ENCODE measurements at regions of chr5 and their contacts with region 1.

Region 1: DNA sequence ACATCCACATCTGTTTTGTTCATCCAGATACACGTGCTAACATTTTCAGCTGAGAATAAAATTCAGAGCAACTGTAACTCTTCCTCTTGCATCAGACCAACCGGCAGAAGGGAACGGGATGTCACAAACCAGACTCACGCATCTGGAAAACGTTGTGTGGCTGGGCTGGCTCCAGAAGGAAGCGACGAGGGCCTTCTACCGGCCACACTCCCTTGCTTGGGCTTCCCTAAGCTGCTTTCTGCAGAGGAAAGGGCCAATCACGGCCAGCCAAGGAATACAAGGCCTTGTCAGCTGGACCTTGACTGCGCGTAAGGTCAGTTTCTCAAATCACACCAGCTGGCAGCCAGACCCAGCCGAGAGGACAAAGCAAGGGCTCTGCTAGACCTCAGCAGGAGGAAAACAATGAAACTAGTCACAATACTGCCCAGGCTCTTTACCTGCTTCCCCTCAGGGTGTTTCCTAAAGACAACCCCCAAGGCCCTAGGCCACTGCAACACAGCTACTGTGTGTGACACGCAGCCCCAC is 106.1 kb downstream of the THBS4 start:
- DNase-seq: peak in 2 of 14 experiments; percentile 40 to 42
- ATAC-seq: no peak
- H3K4me3 ChIP-seq: no peak overlapping the region
- H3K4me3 Mint-ChIP-seq: peak overlapping the region; percentile 84
- H3K27ac ChIP-seq: peak overlapping the region; percentile 42 to 51
- H3K27ac Mint-ChIP-seq: peak overlapping the region; percentile 95
- H3K4me1 ChIP-seq: peaks cover 60% of the 10 kb centered on the region
- H3K4me1 Mint-ChIP-seq: peaks cover 84% of the 10 kb centered on the region
- H3K27me3 ChIP-seq: no peaks in the 10 kb centered on the region
- H3K27me3 Mint-ChIP-seq: no peaks in the 10 kb centered on the region
- CTCF ChIP-seq: no peak

Region 2: GRCh38 chr5:80103371-80103770 is 37.8 kb before region 1 on chr5:
- CTCF ChIA-PET with region 1: no interaction called
- POLR2A ChIA-PET with region 1: interaction called, 13 read pairs
- intact Hi-C with region 1: no loop called
- DNase-seq: no peak
- ATAC-seq: no peak
- H3K4me3 ChIP-seq: no peak overlapping the region
- H3K4me3 Mint-ChIP-seq: no peak overlapping the region
- H3K27ac ChIP-seq: no peak overlapping the region
- H3K27ac Mint-ChIP-seq: peak overlapping the region; percentile 41
- H3K4me1 ChIP-seq: peaks cover 3% of the 10 kb centered on the region
- H3K4me1 Mint-ChIP-seq: peaks cover 54% of the 10 kb centered on the region
- H3K27me3 ChIP-seq: no peaks in the 10 kb centered on the region
- H3K27me3 Mint-ChIP-seq: no peaks in the 10 kb centered on the region
- CTCF ChIP-seq: no peak

Region 3: DNA sequence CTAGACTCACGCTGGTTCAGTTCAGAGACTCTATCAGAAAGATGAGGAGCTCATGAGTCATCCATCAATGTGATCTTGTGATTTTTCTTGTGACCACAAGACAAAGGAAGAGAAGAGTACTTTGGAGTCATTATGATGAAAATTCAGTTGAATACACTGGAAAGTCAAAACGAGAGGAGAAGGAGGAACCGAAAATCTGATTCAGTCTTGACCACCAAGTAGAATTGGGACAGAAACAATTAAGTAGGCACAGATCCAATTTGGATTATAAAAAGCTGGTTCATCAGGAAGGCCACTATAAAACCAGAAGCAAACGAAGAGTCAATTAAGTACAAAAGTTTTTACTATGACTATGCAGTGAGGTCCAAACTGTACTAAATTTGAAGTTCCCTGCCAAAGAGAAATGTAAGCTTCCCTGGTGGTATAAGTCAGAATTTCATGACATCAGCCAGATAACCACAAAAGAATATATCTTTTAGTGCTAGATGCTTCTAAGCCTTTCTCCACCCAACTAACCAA is 15.2 kb before region 1 on chr5:
- CTCF ChIA-PET with region 1: interaction called, 8 read pairs
- POLR2A ChIA-PET with region 1: interaction called, 19 read pairs
- intact Hi-C with region 1: loop called in 1 of 2 experiments (anchors 1 kb)
- DNase-seq: peak in 4 of 14 experiments; percentile 50 to 75 (median 62)
- ATAC-seq: peak; percentile 83
- H3K4me3 ChIP-seq: no peak overlapping the region
- H3K4me3 Mint-ChIP-seq: peak overlapping the region; percentile 1
- H3K27ac ChIP-seq: peak overlapping the region in 1 of 2 donors; percentile 35
- H3K27ac Mint-ChIP-seq: peak overlapping the region; percentile 60
- H3K4me1 ChIP-seq: peaks cover 38% of the 10 kb centered on the region
- H3K4me1 Mint-ChIP-seq: peaks cover 57% of the 10 kb centered on the region
- H3K27me3 ChIP-seq: no peaks in the 10 kb centered on the region
- H3K27me3 Mint-ChIP-seq: no peaks in the 10 kb centered on the region
- CTCF ChIP-seq: no peak

Region 4: DNA sequence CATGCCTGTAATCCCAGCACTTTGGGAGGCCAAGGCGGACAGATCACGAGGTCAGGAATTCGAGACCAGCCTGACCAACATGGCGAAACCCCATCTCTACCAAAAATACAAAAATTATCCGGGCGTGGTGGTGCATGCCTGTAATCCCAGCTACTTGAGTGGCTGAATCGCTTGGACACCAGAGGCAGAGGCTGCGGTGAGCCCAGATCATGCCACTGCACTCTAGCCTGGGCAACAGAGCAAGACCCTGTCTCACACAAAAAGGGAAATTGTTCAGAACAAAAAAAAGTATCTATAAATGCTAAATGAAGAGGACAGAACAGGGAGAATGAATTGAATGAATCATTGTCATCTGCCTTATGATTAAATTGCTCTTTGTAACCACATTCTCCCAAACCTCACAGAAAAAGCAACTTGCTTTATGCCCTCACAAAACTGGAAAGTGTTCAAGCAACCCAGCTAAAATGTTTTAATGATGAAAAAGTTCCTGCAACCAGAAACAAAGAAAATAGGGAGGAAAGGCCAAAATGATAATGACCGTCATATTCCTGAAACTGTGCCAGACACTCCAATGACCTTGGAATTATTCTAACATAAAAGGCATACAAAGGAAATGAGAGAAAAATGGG is 31.0 kb after region 1 on chr5:
- CTCF ChIA-PET with region 1: no interaction called
- POLR2A ChIA-PET with region 1: interaction called, 4 read pairs
- intact Hi-C with region 1: loop called in 1 of 2 experiments (anchors 5 kb)
- DNase-seq: no peak
- ATAC-seq: no peak
- H3K4me3 ChIP-seq: no peak overlapping the region
- H3K4me3 Mint-ChIP-seq: no peak overlapping the region
- H3K27ac ChIP-seq: no peak overlapping the region
- H3K27ac Mint-ChIP-seq: peak overlapping the region; percentile 78
- H3K4me1 ChIP-seq: peaks cover 14% of the 10 kb centered on the region
- H3K4me1 Mint-ChIP-seq: peaks cover 48% of the 10 kb centered on the region
- H3K27me3 ChIP-seq: no peaks in the 10 kb centered on the region
- H3K27me3 Mint-ChIP-seq: no peaks in the 10 kb centered on the region
- CTCF ChIP-seq: no peak

Region 5: DNA sequence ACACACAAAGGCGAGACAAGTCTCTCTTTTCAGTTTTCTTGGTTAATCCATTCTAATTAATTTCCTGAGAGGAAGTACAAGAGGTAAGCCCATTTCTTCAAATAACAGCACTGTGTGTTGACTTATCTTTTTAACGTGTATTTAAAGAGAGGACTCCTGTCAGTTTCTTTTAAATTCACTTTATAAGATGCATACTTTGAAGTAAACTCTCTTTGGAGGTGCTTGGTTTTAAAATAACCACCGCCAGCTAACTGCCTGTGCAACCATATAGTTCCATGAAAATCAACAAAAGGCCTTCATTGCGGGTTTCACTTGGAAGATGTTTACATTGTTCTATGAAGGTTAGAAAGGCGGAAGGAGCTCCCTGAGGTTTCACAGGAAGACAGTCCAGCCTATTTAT is 127.7 kb after region 1 on chr5:
- CTCF ChIA-PET with region 1: no interaction called
- POLR2A ChIA-PET with region 1: interaction called, 14 read pairs
- intact Hi-C with region 1: loop called in 1 of 2 experiments (anchors 5 kb)
- DNase-seq: no peak
- ATAC-seq: peak; percentile 35
- H3K4me3 ChIP-seq: no peak overlapping the region
- H3K4me3 Mint-ChIP-seq: peak overlapping the region; percentile 81
- H3K27ac ChIP-seq: peak overlapping the region in 1 of 2 donors; percentile 5
- H3K27ac Mint-ChIP-seq: peak overlapping the region; percentile 99
- H3K4me1 ChIP-seq: peaks cover 40% of the 10 kb centered on the region
- H3K4me1 Mint-ChIP-seq: peaks cover 56% of the 10 kb centered on the region
- H3K27me3 ChIP-seq: no peaks in the 10 kb centered on the region
- H3K27me3 Mint-ChIP-seq: no peaks in the 10 kb centered on the region
- CTCF ChIP-seq: no peak

Region 6: GRCh38 chr5:80414113-80414512 is 272.9 kb after region 1 on chr5:
- CTCF ChIA-PET with region 1: no interaction called
- POLR2A ChIA-PET with region 1: no interaction called
- intact Hi-C with region 1: no loop called
- DNase-seq: peak in 1 of 14 experiments; percentile 15
- ATAC-seq: no peak
- H3K4me3 ChIP-seq: no peak overlapping the region
- H3K4me3 Mint-ChIP-seq: no peak overlapping the region
- H3K27ac ChIP-seq: no peak overlapping the region
- H3K27ac Mint-ChIP-seq: no peak overlapping the region
- H3K4me1 ChIP-seq: peaks cover 3% of the 10 kb centered on the region
- H3K4me1 Mint-ChIP-seq: peaks cover 43% of the 10 kb centered on the region
- H3K27me3 ChIP-seq: no peaks in the 10 kb centered on the region
- H3K27me3 Mint-ChIP-seq: no peaks in the 10 kb centered on the region
- CTCF ChIP-seq: no peak

Region 7: GRCh38 chr5:80569961-80570786 is 429.0 kb after region 1 on chr5 and contains the start of gene ANKRD34B:
- CTCF ChIA-PET with region 1: no interaction called
- POLR2A ChIA-PET with region 1: no interaction called
- intact Hi-C with region 1: no loop called
- DNase-seq: peak in 1 of 14 experiments; percentile 5
- ATAC-seq: no peak
- H3K4me3 ChIP-seq: peak within 1 kb of the TSS; percentile 32
- H3K4me3 Mint-ChIP-seq: no peak within 1 kb of the TSS
- H3K27ac ChIP-seq: no peak within 1 kb of the TSS
- H3K27ac Mint-ChIP-seq: no peak within 1 kb of the TSS
- H3K4me1 ChIP-seq: peaks cover 13% of the 10 kb centered on the region
- H3K4me1 Mint-ChIP-seq: no peaks in the 10 kb centered on the region
- H3K27me3 ChIP-seq: peaks cover 45 to 74% of the 10 kb centered on the region in 2 experiments
- H3K27me3 Mint-ChIP-seq: peaks cover 75% of the 10 kb centered on the region
- CTCF ChIP-seq: no peak
- total RNA-seq, gene ANKRD34B: not detected